ENCODE measurements at regions of chr5 and their contacts with region 1.

Region 1: DNA sequence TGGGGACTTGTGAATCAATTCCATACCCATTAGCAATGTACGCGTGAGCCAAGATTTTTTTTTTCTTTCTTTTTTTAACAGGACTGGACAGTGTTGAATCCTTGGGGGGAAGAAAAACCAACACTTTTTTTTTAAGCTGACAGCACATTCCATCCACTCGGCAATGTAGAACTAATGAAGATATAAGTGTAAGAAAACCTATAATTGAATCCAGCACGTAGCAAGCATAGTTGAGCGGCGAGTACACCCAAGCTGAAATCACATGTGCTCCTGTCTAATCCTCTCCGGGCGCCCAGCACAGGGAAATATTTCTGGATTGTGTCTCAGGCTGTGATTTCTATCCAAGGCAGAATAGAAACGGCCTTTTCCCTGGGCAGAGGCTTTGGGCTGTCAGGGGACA is 118.2 kb downstream of the BOD1 start:
- DNase-seq: no peak

Region 2: DNA sequence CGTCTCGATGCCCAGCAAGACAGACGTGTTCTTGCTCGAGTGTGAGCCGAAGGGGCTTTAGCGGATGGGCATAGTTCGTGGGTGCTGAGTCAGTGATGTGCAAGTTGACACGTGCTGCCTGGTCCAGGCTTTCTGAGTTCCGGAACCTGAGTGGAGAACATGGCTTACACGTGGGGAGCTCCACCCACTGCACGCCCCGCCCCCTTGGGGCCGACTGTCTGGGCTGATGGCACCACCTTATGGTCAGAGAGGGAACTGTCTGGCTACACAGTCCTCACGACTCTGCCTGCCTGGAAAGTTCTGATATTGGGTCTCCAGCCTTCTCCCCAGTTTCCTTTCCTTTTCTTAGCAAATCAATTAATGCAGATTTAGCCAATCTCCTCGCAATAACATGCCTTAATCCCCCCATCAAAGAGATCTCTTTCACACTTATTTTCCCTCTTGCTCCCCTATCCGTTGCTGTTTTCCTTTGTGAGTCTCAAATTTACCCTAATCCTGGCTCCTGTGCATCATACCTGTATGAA is 166.3 kb before region 1 on chr5:
- intact Hi-C with region 1: loop called (anchors 10 kb)
- DNase-seq: peak; percentile 36 to 96 (median 76)

Region 3: GRCh38 chr5:173355561-173355960 is 142.7 kb before region 1 on chr5:
- intact Hi-C with region 1: no loop called
- DNase-seq: no peak

Region 4: DNA sequence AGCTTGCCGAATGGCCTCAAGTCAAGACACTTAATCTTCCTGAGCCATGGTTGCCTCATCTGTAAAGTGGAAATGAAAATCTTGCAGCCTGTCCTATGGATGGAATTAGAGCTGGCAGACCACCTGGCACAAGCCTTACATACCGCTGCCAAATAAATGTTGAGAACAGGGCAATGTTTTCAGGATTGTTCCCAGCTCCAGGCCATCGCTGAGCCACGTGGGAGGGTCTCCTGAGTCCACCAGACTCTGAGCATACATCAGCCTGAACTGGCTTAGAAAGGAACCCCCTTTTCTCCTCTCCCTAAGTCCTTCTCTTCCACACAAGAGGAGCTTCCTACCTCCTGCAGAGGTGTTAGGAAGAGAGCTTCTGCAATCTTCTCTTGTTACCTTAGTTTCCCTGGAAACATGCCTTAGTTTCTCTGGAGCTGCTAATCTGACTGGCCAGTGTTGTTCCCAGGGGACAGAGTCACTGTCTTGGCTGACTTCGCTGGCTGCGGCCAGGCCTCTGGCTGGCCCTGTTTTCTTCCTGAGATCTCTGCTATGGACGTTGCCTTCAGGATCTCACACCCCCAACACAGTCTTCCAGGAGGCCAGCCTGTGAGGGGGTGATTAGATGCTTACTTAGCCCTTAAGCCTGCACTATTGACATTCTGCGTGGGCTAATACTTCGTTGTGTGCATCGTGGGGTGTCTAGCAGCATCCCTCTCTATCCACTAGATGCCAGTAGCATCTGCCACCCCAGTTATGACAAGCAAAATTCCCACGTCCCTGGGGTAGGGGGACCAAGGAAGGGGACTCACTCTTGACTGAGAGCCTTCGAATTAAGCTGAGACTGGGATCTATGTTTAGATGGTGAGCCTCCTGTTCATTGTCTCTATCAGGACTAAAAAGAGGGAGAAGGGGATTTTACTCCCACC is 56.0 kb after region 1 on chr5:
- intact Hi-C with region 1: no loop called
- DNase-seq: peak in 1 of 10 donors; percentile 32

Region 5: DNA sequence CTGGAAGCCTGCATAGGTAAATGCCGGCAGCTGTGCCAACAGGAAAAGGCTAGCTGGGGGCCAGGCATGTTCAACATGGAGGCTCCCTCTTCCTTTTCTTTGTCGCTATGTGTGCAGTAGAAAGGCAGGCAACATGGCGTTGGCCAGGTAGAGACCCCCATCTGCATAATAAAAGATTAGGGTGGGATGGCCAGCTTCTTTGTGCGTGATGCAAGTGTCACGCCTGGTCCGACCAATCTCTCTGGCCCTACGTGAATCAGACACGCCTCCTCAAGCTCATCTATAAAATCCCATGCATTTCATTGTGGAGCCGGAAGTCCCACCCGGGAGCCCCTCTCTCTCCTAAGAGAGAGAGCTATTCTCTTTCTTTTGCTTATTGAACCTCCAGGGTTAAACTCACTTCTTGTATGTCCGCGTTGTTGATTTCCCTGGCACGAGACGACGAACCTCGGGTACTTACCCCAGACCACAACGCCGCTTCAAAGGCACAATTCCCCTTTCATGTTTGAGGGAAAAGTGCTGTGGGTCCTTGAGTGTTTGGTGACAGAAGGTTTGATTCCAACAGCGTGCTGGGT is 465.7 kb after region 1 on chr5:
- intact Hi-C with region 1: no loop called
- DNase-seq: peak in 5 of 10 donors; percentile 39 to 92 (median 69)